ENCODE measurements at regions of chr19 and their contacts with region 1.

Region 1: GRCh38 chr19:46025835-46026234 is 3.0 kb upstream of the PGLYRP1 start:
- DNase-seq: peak in 1 of 2 donors; percentile 1
- H3K4me3 ChIP-seq: no peak overlapping the region
- CTCF ChIP-seq: no peak
- POLR2A ChIP-seq: no peak

Region 2: GRCh38 chr19:46069841-46070341 is 44.1 kb after region 1 on chr19:
- intact Hi-C with region 1: loop called (anchors 5 kb)
- DNase-seq: no peak
- H3K4me3 ChIP-seq: no peak overlapping the region
- CTCF ChIP-seq: no peak
- POLR2A ChIP-seq: no peak